ENCODE measurements at regions of chr3 and their contacts with region 1.

Region 1: GRCh38 chr3:186806089-186807055 is at the start of gene RFC4:
- DNase-seq: peak; percentile 79
- H3K4me3 Mint-ChIP-seq: peak within 1 kb of the TSS; percentile 90
- H3K27ac Mint-ChIP-seq: peak within 1 kb of the TSS; percentile 85
- H3K4me1 Mint-ChIP-seq: peaks cover 23% of the 10 kb centered on the region
- H3K27me3 Mint-ChIP-seq: no peaks in the 10 kb centered on the region
- total RNA-seq, gene RFC4: 97.2 and 105 TPM in 2 replicates

Region 2: DNA sequence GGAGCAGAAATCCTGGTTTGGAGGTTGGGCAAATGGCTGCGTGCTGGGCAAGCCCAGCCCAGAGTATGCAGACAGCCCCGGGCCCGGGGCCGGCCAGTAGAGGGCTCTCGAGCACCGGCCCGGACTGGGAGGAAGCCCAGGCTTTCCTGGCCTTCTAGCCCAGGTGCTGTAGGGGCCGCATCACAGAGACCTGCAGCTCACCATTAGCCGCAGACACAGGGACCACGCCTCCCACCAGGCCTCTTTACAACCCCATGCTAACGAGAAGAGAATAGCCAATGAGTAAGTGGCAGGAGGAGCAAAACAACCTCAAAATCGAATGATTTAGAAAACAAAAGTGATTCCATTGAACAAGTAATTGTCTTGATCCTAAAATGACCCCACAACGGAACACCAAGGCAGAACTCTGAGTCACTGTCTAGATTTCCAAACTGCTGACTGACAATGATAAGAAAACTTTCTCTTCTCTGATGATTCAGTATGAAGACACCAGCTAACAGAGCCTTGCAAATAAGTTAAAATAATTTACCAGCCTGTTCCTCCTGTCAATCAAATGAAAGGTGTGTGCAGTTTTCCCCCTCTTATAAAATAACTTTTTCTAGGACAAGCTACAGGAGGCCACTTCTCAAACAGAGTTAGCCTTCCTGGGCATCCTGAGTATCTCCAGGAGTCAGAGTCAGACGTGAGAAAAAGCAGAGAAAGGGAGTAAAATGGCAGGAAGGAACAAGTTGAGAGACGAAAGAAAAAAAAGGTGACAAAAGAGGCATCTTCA is 546.6 kb before region 1 on chr3:
- intact Hi-C with region 1: loop called (anchors 10 kb)
- DNase-seq: peak; percentile 27
- H3K4me3 Mint-ChIP-seq: peak overlapping the region; percentile 3
- H3K27ac Mint-ChIP-seq: peak overlapping the region; percentile 40
- H3K4me1 Mint-ChIP-seq: peaks cover 20% of the 10 kb centered on the region
- H3K27me3 Mint-ChIP-seq: peaks cover 5% of the 10 kb centered on the region

Region 3: DNA sequence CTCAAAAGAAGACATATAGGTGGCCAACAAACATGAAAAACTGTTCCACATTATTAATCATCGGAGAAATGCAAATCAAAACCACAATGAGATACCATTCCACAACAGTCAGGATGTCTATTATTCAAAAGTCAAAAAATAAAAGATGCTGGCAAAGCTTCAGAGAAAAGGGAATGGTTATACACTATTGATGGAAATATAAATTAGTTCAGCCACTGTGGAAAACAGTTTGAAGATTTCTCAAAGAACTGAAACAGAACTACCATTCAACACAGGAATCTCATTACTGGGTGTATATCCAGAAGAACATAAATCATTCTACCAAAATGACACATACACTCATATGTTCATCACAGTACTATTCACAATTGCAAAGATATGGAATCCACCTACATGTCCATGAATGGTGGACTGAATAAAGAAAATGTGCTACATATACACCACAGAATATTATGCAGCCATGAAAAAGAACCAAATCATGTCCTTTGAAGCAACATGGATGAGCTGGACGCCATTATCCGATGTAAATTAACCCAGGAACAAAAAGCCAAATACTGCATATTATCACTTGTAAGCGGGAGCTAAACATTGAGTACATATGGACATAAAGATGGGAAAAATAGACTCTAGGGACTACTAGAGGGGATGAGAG is 411.7 kb before region 1 on chr3:
- intact Hi-C with region 1: no loop called
- DNase-seq: no peak
- H3K4me3 Mint-ChIP-seq: no peak overlapping the region
- H3K27ac Mint-ChIP-seq: no peak overlapping the region
- H3K4me1 Mint-ChIP-seq: no peaks in the 10 kb centered on the region
- H3K27me3 Mint-ChIP-seq: no peaks in the 10 kb centered on the region

Region 4: DNA sequence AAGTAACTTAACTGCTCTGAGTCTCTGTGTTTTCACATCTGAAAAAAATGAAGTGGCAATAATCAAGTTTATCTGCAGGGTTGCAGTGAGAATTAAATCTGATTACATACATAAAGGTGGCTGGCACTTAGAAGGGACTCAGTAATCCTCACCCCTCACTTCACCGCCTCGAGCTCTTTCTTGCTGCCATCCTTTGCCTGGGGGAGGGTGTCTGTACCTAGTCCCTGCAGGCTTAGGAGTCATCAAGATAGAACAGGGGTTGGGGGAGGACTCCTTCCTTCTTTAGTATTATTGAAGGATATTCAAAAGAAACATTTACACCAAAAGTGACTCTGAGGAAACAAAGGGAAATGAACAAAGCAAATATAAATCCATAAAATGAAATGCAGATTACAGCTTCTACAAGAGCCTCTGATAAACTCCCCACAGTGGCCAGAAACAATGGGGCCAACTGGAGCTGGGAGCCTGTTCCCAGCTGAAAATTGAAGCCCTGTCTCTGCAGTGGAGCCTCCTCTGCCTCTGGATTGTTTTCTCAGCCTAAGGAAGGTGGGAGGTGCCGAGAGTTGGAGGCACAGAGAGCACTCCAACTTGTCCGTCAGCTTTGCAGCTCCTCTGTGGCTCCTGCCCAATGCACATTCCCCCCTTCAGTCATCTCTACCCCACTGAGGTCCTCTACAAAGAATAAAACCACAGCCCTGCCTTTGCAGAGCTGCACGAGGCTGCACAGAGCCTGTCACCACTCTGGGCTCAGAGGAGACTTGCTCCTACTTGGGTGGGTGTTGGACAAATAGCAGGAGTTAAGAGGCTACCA is 304.0 kb before region 1 on chr3:
- intact Hi-C with region 1: no loop called
- DNase-seq: no peak
- H3K4me3 Mint-ChIP-seq: no peak overlapping the region
- H3K27ac Mint-ChIP-seq: no peak overlapping the region
- H3K4me1 Mint-ChIP-seq: peaks cover 10% of the 10 kb centered on the region
- H3K27me3 Mint-ChIP-seq: peaks cover 2% of the 10 kb centered on the region

Region 5: GRCh38 chr3:186694288-186695032 is 111.9 kb before region 1 on chr3:
- intact Hi-C with region 1: no loop called
- DNase-seq: no peak
- H3K4me3 Mint-ChIP-seq: no peak overlapping the region
- H3K27ac Mint-ChIP-seq: no peak overlapping the region
- H3K4me1 Mint-ChIP-seq: peaks cover 2% of the 10 kb centered on the region
- H3K27me3 Mint-ChIP-seq: peaks cover 31% of the 10 kb centered on the region

Region 6: GRCh38 chr3:186821429-186822367 is 15.3 kb after region 1 on chr3:
- intact Hi-C with region 1: loop called (anchors 1 kb)
- DNase-seq: no peak
- H3K4me3 Mint-ChIP-seq: no peak overlapping the region
- H3K27ac Mint-ChIP-seq: no peak overlapping the region
- H3K4me1 Mint-ChIP-seq: peaks cover 19% of the 10 kb centered on the region
- H3K27me3 Mint-ChIP-seq: no peaks in the 10 kb centered on the region

Region 7: DNA sequence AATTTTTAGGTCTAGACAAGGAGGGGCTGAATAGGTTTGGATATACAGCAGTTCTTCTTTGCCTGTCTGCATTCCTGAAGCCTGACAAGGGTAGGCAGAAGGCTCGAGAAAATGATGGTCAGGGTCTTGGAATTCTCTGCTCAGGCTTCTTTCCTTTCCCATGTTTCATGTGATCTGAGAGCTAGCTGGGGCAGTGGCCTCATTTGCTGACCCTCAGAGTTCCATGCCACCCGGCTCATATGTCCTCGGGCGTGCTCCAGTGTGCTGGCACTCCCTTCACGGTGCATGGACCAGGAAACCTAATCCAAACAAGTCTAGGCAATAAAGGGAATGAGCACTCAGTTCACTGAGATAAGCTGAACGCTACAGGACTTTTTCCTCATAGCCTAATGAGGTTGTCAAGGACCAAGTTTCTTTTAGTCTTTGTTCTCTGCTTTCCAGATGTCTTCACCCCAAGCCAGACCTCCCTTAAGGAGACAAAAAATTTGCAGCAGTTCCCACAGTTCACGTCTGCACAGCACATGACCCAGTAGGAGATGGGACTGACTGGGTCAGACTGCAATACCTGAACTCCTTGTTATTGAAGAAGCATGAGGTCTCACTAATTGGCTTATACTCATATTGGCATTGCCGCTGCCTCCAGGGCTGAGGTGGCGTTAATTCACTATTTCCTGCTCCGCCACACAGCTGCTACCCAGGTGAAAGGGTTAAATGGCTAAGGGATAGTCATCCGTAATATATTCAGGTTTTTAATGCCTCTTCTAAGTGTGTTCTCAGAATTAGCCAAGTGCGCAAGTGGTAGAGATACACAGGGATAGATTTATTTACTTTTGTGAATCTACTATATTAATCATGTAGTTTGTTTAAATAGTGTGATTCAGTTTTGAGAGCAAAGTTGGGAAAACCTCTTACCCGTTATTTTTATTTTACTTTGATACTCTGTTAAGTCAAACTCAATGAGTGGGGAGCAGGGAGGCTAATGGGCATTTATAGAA is 546.5 kb after region 1 on chr3:
- intact Hi-C with region 1: no loop called
- DNase-seq: no peak
- H3K4me3 Mint-ChIP-seq: no peak overlapping the region
- H3K27ac Mint-ChIP-seq: no peak overlapping the region
- H3K4me1 Mint-ChIP-seq: no peaks in the 10 kb centered on the region
- H3K27me3 Mint-ChIP-seq: peaks cover 21% of the 10 kb centered on the region